Body of pancreas (tissue), 4 donors: ENCODE measurements at regions of chrX and their contacts with region 1.

Region 1: GRCh38 chrX:154980330-154981096 is 42.0 kb downstream of the F8 start:
- DNase-seq: peak; percentile 82 to 88 (median 84)
- ATAC-seq: peak; percentile 91
- H3K4me3 ChIP-seq: no peak overlapping the region
- H3K27ac ChIP-seq: peak overlapping the region in 3 of 4 donors; percentile 14 to 17 (median 15)
- H3K4me1 ChIP-seq: peaks cover 4% of the 10 kb centered on the region
- H3K27me3 ChIP-seq: no peaks in the 10 kb centered on the region
- CTCF ChIP-seq: peak; percentile 47 to 90 (median 82)
- POLR2A ChIP-seq: no peak

Region 2: GRCh38 chrX:155056877-155057792 is 76.6 kb after region 1 on chrX:
- intact Hi-C with region 1: loop called (anchors 10 kb)
- DNase-seq: peak; percentile 68 to 78 (median 72)
- ATAC-seq: peak; percentile 94
- H3K4me3 ChIP-seq: no peak overlapping the region
- H3K27ac ChIP-seq: peak overlapping the region; percentile 16 to 74 (median 40)
- H3K4me1 ChIP-seq: peaks cover 19% of the 10 kb centered on the region
- H3K27me3 ChIP-seq: no peaks in the 10 kb centered on the region
- CTCF ChIP-seq: peak; percentile 49 to 84 (median 77)
- POLR2A ChIP-seq: no peak